T-cell (primary cell): ENCODE measurements at regions of chr12 and their contacts with region 1.

Region 1: DNA sequence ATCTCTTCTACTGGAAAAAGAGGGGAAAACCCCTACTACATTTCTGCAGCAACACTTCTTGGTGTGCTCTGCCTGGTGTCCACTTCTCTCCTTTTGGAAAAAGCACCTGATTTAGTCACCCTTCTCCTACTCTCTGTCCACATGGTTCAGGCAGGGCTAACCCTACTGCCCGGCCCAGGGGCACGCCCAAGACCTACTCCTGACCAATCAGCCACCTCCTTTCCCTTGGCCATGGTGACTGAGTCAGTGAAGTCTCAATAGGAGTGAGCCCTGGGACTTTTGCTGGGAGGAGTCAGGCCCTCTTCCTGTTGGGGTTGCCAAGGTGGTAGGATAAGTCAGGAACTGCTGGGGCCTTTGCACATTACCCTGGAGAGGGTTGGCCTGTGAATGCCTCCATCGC is 52.5 kb upstream of the MYL2 start:
- DNase-seq: no peak
- ATAC-seq: no peak
- H3K4me3 ChIP-seq: no peak overlapping the region
- H3K4me3 Mint-ChIP-seq: no peak overlapping the region
- H3K27ac ChIP-seq: no peak overlapping the region
- H3K27ac Mint-ChIP-seq: no peak overlapping the region
- H3K4me1 ChIP-seq: no peaks in the 10 kb centered on the region
- H3K4me1 Mint-ChIP-seq: no peaks in the 10 kb centered on the region
- H3K27me3 ChIP-seq: peaks cover 0 to 6% of the 10 kb centered on the region in 2 experiments
- H3K27me3 Mint-ChIP-seq: peaks cover 0 to 5% of the 10 kb centered on the region in 2 donors

Region 2: GRCh38 chr12:112473056-112473455 is 1500.2 kb after region 1 on chr12:
- CTCF ChIA-PET with region 1: no interaction called
- POLR2A ChIA-PET with region 1: interaction called in 1 of 2 experiments, 11 read pairs
- DNase-seq: peak in 1 of 35 experiments; percentile 4
- ATAC-seq: no peak
- H3K4me3 ChIP-seq: no peak overlapping the region
- H3K4me3 Mint-ChIP-seq: no peak overlapping the region
- H3K27ac ChIP-seq: no peak overlapping the region
- H3K27ac Mint-ChIP-seq: no peak overlapping the region
- H3K4me1 ChIP-seq: no peaks in the 10 kb centered on the region
- H3K4me1 Mint-ChIP-seq: peaks cover 0 to 9% (median 0%) of the 10 kb centered on the region in 3 donors
- H3K27me3 ChIP-seq: no peaks in the 10 kb centered on the region
- H3K27me3 Mint-ChIP-seq: no peaks in the 10 kb centered on the region